ENCODE measurements at regions of chr5 and their contacts with region 1.

Region 1: DNA sequence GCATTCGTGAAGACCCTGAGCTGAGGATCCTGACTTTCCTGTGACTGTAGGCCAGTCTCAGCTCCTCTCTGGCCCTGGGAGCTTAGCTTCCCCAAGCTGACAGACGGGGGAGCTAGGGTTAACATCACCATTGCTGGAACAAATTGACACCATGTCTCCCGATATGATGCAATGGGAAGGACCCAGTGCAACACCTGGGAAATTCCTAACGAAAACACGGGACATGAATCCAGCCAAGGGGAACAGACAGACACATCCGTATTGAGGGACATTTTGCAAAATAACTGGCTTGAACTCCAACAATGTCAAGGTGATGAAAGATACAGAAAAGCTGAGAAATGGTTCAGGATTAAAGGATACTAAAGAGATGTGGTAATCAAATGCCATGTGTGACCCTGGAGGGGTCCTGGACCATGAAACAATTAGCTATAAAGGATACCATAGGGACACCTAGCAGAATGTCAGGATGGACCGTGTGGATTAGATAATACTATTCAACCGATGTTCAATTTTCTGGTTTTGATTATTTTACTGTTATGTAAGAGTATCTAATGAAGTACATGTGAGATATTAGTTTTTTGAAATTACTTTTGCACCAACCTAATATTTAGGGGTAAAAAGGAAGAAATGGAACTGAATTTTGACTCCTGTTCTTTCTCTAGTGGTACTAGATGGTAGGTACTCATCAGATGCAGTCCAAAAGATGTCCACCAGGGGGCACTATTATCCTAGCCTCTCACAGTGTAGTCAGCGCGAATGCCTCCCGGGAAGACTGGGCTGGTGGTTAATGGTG is 52.7 kb downstream of the NDST1 start:
- DNase-seq: peak; percentile 94
- ATAC-seq: peak; percentile 96
- H3K4me3 Mint-ChIP-seq: no peak overlapping the region
- H3K27ac Mint-ChIP-seq: no peak overlapping the region
- H3K4me1 Mint-ChIP-seq: no peaks in the 10 kb centered on the region
- H3K27me3 Mint-ChIP-seq: peaks cover 2% of the 10 kb centered on the region
- CTCF ChIP-seq: peak; percentile 92

Region 2: DNA sequence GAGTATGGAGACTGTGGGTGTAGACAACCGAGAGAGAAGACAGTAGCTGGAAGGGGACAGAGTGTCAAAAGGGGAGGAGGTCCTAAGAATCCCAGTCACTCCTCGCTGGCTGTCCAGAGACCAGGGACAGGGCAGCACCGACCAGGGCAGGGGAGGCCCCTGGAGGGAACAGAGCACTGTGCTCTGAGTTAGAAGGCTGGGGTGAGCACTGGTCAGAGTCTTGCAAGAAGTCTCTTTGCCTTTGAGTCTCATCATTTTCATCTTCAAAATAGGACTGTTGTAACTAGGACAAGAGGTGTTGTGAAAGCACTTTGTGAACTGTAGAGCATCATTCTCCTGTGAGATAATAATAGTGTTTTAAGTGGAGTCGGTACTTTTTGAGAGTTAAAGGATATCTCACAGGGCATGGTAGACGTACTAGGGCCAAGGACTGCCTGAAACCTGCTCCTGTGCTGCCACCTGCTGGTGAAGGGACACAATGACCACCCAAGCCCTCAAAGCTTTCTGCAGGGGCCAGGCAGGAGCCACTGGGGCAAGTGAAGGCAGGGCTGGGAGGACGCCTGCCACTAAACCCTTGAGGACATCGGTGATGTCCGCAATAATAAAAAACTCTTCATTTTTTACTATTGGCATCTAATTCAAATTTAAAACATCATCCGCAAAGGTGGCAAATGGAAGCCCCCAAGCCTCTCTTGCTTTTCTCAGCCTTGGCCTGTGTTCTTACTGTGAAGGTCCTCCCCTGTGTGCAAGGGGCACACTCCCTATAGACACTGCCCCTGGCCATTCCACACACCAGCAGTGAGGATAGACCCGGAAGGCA is 342.5 kb before region 1 on chr5:
- CTCF ChIA-PET with region 1: no interaction called
- POLR2A ChIA-PET with region 1: no interaction called
- intact Hi-C with region 1: no loop called
- DNase-seq: peak; percentile 86
- ATAC-seq: peak; percentile 98
- H3K4me3 Mint-ChIP-seq: no peak overlapping the region
- H3K27ac Mint-ChIP-seq: no peak overlapping the region
- H3K4me1 Mint-ChIP-seq: peaks cover 2% of the 10 kb centered on the region
- H3K27me3 Mint-ChIP-seq: peaks cover 6% of the 10 kb centered on the region
- CTCF ChIP-seq: peak; percentile 79

Region 3: DNA sequence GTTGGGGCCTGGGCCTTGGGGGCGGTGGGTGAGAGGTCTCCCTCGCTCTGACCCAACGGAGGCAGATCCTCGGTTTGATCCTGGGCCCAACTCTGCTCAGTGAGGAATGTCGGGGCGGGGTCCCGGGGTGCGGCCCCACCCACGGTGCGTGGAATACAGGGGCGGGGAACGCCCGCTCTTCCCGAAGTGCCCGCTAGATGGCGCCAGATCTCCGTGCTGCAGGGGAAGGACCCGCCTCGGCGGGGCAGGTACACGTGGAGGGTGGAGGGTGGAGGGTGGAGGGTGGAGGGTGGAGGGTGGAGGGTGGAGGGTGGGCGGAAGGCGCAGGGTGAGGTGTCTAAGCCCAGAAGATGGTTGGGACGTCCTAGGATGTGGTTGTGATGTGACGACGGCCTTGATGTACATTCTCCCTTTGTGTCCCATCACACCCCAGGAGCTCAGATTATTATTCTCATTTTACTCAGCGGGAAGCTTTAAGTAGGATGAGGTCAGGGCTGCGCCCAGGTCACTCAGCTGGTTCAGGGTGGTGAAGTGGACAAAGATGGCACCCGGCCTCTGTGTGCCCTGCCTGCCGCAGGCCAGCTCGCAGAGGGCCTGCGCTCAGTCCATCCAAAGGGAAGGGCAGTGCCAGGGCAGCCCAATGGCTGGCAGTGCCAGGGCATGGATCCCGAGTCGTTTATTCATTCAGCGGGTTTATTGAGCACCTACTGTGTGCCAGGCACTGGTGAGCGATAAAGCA is 101.6 kb before region 1 on chr5:
- CTCF ChIA-PET with region 1: interaction called, 21 read pairs
- POLR2A ChIA-PET with region 1: no interaction called
- intact Hi-C with region 1: no loop called
- DNase-seq: peak; percentile 88
- ATAC-seq: peak; percentile 92
- H3K4me3 Mint-ChIP-seq: no peak overlapping the region
- H3K27ac Mint-ChIP-seq: no peak overlapping the region
- H3K4me1 Mint-ChIP-seq: peaks cover 34% of the 10 kb centered on the region
- H3K27me3 Mint-ChIP-seq: no peaks in the 10 kb centered on the region
- CTCF ChIP-seq: peak; percentile 80

Region 4: DNA sequence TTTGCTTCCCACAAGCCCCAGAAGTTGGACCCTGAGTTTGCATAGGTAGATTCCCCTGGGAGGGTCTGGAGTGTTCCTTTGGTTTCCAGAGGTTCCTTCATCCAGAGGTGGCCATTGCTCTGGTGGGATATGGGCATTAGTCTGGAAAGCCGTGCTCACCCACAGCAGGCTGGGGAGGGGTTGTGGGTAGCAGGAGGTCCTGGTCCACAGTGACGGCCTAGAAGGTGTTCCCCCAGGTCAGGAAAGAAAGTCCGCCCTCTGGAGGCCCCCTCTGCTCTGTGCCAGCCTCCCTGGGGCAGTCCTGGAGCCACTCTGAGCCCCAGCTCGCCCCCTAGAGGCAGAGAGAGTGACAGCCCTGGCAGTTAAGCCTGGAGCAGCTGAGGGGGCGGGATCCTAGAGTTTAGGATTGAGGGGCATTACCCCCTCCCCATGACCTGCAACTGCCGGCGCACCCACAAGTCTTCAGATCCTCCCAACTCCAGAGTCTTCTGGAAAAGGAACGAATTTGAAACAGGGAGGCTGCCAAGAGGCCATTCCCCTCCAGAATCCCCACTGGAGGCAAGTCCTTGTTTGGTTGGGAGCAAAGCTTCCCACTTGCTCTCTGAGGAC is 15.9 kb before region 1 on chr5:
- CTCF ChIA-PET with region 1: interaction called, 20 read pairs
- POLR2A ChIA-PET with region 1: no interaction called
- intact Hi-C with region 1: no loop called
- DNase-seq: peak; percentile 86
- ATAC-seq: peak; percentile 100
- H3K4me3 Mint-ChIP-seq: no peak overlapping the region
- H3K27ac Mint-ChIP-seq: no peak overlapping the region
- H3K4me1 Mint-ChIP-seq: no peaks in the 10 kb centered on the region
- H3K27me3 Mint-ChIP-seq: no peaks in the 10 kb centered on the region
- CTCF ChIP-seq: peak; percentile 81

Region 5: DNA sequence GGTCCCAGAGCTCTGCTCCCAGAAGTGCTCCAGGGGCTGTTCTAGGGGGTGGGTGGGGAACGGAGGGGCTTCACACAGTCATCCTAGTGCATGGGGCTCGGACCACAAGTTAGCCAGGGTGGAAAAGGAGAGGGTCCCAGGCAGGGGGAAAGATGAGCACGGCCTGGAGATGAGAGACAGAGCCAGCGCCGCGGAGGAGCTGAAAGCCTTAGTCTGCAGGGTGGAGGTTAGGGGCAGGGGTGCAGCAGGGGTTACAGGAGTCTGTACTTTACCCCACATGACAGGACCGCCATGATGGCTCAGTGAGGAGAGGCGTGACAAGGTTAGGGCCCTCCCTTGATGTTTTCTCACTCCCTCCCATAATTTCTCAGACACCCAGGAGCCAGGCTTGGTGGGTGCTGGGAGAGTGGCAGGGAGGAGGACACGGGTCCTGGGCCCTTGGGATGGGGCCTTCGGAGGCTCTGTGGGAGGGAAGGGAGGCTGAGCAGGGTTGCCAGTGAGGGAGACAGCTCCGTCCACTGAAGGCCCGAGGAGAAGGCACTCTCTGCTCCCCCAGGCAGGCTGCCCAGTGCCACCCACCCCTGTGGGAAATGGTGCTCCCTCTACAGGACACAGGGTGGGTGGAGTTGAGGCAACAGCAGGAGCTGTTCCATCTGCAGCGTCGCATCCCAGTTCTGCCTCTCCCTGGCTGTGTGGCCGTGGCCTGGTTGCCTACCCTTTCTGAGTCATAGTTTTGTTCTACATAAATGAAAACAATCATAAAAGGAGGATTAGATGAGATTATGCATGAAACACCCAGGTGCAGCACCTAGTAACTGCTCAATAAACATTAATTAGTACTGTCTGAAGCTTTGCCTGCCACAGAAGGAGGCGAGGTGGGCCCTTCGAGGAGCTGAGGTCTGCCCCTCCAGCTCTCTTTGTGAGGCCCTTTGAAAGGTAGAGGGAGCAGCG is 13.5 kb after region 1 on chr5:
- CTCF ChIA-PET with region 1: interaction called, 11 read pairs
- POLR2A ChIA-PET with region 1: no interaction called
- intact Hi-C with region 1: no loop called
- DNase-seq: no peak
- ATAC-seq: no peak
- H3K4me3 Mint-ChIP-seq: no peak overlapping the region
- H3K27ac Mint-ChIP-seq: no peak overlapping the region
- H3K4me1 Mint-ChIP-seq: no peaks in the 10 kb centered on the region
- H3K27me3 Mint-ChIP-seq: no peaks in the 10 kb centered on the region
- CTCF ChIP-seq: no peak

Region 6: GRCh38 chr5:150582241-150583109 is 21.9 kb after region 1 on chr5:
- CTCF ChIA-PET with region 1: interaction called, 11 read pairs
- POLR2A ChIA-PET with region 1: no interaction called
- intact Hi-C with region 1: no loop called
- DNase-seq: no peak
- ATAC-seq: no peak
- H3K4me3 Mint-ChIP-seq: no peak overlapping the region
- H3K27ac Mint-ChIP-seq: no peak overlapping the region
- H3K4me1 Mint-ChIP-seq: no peaks in the 10 kb centered on the region
- H3K27me3 Mint-ChIP-seq: peaks cover 9% of the 10 kb centered on the region
- CTCF ChIP-seq: no peak

Region 7: DNA sequence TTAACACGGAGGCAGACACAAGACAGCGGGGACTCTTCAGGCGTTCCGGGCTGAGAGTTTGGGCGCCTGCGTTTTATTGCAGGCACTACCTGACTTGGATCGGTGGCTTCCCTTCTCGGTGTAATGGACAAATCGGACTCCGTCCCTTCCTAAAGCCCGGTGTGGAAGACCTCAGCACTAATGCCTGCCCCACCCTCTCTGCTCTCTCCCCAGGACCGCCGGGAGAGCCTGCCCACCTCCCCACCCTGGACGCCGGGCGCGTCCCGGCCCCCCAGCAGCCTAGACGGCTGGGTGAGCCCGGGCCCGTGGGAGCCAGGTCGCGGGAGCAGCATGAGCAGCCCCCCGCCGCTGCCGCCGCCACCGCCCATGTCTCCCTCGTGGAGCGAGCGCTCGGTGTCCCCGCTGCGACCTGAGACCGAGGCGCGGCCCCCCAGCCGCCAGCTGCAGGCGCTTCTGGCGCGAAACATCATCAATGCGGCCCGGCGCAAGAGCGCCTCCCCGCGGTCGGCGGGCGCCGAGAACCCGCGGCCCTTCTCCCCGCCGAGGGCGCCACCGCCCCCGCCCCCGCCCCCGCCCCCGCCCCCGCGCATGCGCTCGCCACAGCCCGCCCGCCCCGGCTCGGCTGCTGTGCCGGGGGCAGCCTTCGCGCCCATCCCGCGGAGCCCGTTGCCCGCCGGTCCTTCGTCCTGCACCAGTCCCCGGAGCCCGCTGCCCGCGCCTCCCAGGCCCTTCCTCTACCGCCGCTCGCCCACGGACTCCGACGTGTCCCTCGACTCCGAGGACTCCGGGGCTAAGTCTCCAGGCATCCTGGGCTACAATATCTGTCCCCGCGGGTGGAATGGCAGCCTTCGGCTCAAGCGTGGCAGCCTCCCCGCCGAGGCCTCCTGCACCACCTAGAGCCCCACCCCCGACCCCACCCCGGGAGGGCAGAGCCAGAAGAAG is 95.9 kb after region 1 on chr5:
- CTCF ChIA-PET with region 1: interaction called, 49 read pairs
- POLR2A ChIA-PET with region 1: no interaction called
- intact Hi-C with region 1: loop called (anchors 2 kb)
- DNase-seq: peak; percentile 72
- ATAC-seq: peak; percentile 86
- H3K4me3 Mint-ChIP-seq: peak overlapping the region; percentile 66
- H3K27ac Mint-ChIP-seq: peak overlapping the region; percentile 36
- H3K4me1 Mint-ChIP-seq: peaks cover 3% of the 10 kb centered on the region
- H3K27me3 Mint-ChIP-seq: no peaks in the 10 kb centered on the region
- CTCF ChIP-seq: peak; percentile 59

Region 8: DNA sequence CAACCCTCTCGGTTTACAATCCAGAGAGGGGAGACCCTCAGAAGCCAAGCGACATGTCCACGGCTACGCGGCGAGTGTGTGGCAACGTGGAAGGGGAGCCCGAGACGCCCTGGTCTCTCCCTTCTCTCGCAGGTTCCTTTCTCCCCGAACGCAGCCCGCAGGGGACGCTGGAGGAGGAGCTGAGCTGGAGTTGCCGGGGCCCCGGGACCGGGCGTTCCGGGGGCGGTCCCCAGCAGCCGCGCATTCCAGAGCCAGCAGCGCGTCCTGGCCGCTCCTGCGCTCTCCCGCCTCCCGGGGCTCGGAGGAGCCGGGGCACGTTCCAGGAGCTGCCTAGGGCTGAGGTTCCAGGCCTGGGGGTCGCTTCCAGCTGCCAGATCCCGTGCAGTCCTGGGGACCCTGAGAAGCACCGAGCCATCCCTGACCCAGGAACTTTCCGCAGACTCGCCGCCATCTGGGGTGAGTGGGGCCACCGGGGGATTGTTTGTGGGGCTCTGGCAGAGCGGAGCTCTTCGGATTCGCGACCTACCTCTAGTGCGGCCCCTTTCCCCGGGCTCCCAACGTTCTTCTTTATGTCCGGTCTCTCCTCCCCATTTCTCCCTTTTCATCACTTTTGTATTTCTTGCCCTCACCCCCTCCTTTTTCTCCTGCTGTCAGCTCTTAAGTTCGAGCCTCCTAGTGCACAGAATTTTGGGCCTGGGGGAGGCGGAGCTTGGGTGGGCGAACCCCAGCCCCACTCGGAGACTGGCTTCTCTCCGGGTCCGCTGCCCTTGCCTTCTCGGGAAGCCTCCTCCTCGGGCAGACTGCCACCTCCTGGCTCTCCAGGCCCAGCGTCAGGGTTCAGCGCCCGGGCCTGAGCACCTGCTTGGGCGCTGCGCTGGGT is 218.2 kb after region 1 on chr5 and contains the start of gene SMIM3:
- CTCF ChIA-PET with region 1: interaction called, 9 read pairs
- POLR2A ChIA-PET with region 1: interaction called, 3 read pairs
- intact Hi-C with region 1: loop called (anchors 10 kb)
- DNase-seq: peak; percentile 81
- ATAC-seq: peak; percentile 63
- H3K4me3 Mint-ChIP-seq: peak within 1 kb of the TSS; percentile 99
- H3K27ac Mint-ChIP-seq: peak within 1 kb of the TSS; percentile 93
- H3K4me1 Mint-ChIP-seq: peaks cover 53% of the 10 kb centered on the region
- H3K27me3 Mint-ChIP-seq: no peaks in the 10 kb centered on the region
- CTCF ChIP-seq: peak; percentile 42
- total RNA-seq, gene SMIM3: 8.6 to 8.8 TPM